Right cardiac atrium (tissue), 5 donors: ENCODE measurements at regions of chr15 and their contacts with region 1.

Region 1: GRCh38 chr15:26504009-26504408 is 268.9 kb downstream of the GABRB3 start:
- DNase-seq: no peak
- ATAC-seq: no peak
- H3K4me3 ChIP-seq: no peak overlapping the region
- H3K27ac ChIP-seq: no peak overlapping the region
- H3K4me1 ChIP-seq: no peaks in the 10 kb centered on the region
- H3K27me3 ChIP-seq: no peaks in the 10 kb centered on the region

Region 2: GRCh38 chr15:25710184-25710583 is 793.8 kb before region 1 on chr15:
- intact Hi-C with region 1: no loop called
- DNase-seq: peak; percentile 47 to 82 (median 79)
- ATAC-seq: peak; percentile 65
- H3K4me3 ChIP-seq: no peak overlapping the region
- H3K27ac ChIP-seq: no peak overlapping the region
- H3K4me1 ChIP-seq: no peaks in the 10 kb centered on the region
- H3K27me3 ChIP-seq: no peaks in the 10 kb centered on the region

Region 3: GRCh38 chr15:26438316-26438715 is 65.7 kb before region 1 on chr15:
- intact Hi-C with region 1: loop called in 1 of 4 experiments (anchors 10 kb)
- DNase-seq: no peak
- ATAC-seq: no peak
- H3K4me3 ChIP-seq: no peak overlapping the region
- H3K27ac ChIP-seq: no peak overlapping the region
- H3K4me1 ChIP-seq: peaks cover 4% of the 10 kb centered on the region
- H3K27me3 ChIP-seq: no peaks in the 10 kb centered on the region

Region 4: DNA sequence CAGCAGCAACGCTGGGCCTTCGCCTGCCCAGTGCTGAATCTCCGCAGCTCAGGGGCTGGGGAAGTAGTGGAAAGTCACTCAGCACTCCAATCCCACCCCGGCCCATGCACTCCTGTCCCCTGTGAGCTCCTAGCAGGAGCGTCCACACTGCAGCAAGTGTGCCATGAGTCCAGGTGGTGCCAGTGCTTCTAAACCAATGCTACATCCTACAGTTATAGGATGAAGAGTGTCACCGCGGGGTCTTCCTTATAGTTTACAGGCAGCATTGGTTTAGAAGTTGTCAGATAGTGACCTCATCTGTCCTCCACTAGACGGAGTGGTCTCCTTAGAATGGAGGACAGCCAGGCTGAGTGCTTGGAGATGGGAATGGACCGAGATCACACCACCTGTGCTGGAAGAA is 47.5 kb after region 1 on chr15:
- intact Hi-C with region 1: loop called in 1 of 4 experiments (anchors 10 kb)
- DNase-seq: no peak
- ATAC-seq: peak in 1 of 2 donors; percentile 14
- H3K4me3 ChIP-seq: no peak overlapping the region
- H3K27ac ChIP-seq: no peak overlapping the region
- H3K4me1 ChIP-seq: no peaks in the 10 kb centered on the region
- H3K27me3 ChIP-seq: no peaks in the 10 kb centered on the region

Region 5: GRCh38 chr15:26722621-26723160 is 218.7 kb after region 1 on chr15:
- intact Hi-C with region 1: no loop called
- DNase-seq: no peak
- ATAC-seq: no peak
- H3K4me3 ChIP-seq: no peak overlapping the region
- H3K27ac ChIP-seq: no peak overlapping the region
- H3K4me1 ChIP-seq: no peaks in the 10 kb centered on the region
- H3K27me3 ChIP-seq: no peaks in the 10 kb centered on the region

Region 6: GRCh38 chr15:26767169-26767670 is 263.2 kb after region 1 on chr15:
- intact Hi-C with region 1: loop called in 1 of 4 experiments (anchors 10 kb)
- DNase-seq: no peak
- ATAC-seq: no peak
- H3K4me3 ChIP-seq: no peak overlapping the region
- H3K27ac ChIP-seq: no peak overlapping the region
- H3K4me1 ChIP-seq: no peaks in the 10 kb centered on the region
- H3K27me3 ChIP-seq: peaks cover 3% of the 10 kb centered on the region